ENCODE measurements at regions of chr15 and their contacts with region 1.

Region 1: DNA sequence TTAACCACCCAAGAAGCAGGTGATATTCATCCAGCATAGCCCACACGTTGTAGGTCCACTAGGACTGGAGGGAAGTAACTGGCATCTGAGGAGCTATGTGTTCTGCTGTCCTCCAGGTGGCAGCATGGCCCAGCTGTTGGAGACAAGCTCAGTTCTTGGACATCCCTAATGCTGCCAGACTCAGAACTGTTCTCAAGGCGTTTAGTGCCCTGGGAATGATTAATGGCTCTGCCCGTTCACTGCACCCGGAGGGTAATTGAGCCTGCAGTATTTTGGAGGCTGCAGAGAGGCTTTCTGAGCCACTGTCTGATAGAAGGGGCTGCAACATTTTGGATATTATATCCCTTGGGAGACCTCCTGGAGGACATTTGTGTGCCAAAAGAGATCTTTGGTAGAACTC is 521.2 kb upstream of the SEMA6D start:
- DNase-seq: peak; percentile 70
- H3K4me3 ChIP-seq: peak overlapping the region in 1 of 2 experiments; percentile 10; a peak in 1 of 4 replicates
- H3K27ac ChIP-seq: no peak overlapping the region
- H3K4me1 ChIP-seq: peaks cover 0 to 2% of the 10 kb centered on the region in 2 experiments; a peak in 2 of 4 replicates
- H3K27me3 ChIP-seq: no peaks in the 10 kb centered on the region
- CTCF ChIP-seq: peak; percentile 76
- EP300 ChIP-seq: peak in 1 of 2 experiments; percentile 82; a peak in 2 of 4 replicates
- RAD21 ChIP-seq: peak; percentile 100

Region 2: GRCh38 chr15:47184003-47184907 is 11.8 kb before region 1 on chr15:
- CTCF ChIA-PET with region 1: interaction called, 14 read pairs
- POLR2A ChIA-PET with region 1: no interaction called
- DNase-seq: peak; percentile 79
- H3K4me3 ChIP-seq: peak overlapping the region; percentile 52 to 58
- H3K27ac ChIP-seq: peak overlapping the region in 1 of 2 experiments; percentile 47; a peak in 1 of 4 replicates
- H3K4me1 ChIP-seq: peaks cover 0 to 4% of the 10 kb centered on the region in 2 experiments; a peak in 1 of 4 replicates
- H3K27me3 ChIP-seq: peaks cover 13% of the 10 kb centered on the region
- CTCF ChIP-seq: no peak
- EP300 ChIP-seq: no peak
- RAD21 ChIP-seq: no peak

Region 3: DNA sequence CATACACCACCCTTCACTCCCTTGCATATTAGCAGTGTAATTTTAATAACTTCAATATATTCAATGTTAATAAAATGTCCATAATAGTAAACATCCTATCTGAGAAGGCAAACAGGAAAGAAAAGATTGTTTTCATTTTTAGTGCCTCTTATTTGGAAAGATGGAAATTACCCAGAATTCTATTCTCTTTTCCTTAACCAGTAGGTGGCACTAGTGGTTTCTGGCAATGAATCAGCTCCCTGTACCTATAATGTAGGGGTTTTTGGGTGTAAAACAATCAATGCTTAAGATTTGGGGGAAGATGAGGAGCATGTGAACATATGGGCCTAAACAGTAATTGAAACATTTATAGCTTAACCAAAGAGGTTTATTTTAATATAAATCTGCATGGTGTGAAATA is 515.6 kb after region 1 on chr15:
- CTCF ChIA-PET with region 1: interaction called, 21 read pairs
- POLR2A ChIA-PET with region 1: interaction called, 3 read pairs
- DNase-seq: peak; percentile 38
- H3K4me3 ChIP-seq: no peak overlapping the region
- H3K27ac ChIP-seq: no peak overlapping the region
- H3K4me1 ChIP-seq: peaks cover 2 to 6% of the 10 kb centered on the region in 2 experiments; a peak in 3 of 4 replicates
- H3K27me3 ChIP-seq: 0 out of 2 replicates have a peak, but pooled peaks cover 21% of the 10 kb centered on the region
- CTCF ChIP-seq: peak; percentile 77
- EP300 ChIP-seq: no peak
- RAD21 ChIP-seq: peak; percentile 65

Region 4: DNA sequence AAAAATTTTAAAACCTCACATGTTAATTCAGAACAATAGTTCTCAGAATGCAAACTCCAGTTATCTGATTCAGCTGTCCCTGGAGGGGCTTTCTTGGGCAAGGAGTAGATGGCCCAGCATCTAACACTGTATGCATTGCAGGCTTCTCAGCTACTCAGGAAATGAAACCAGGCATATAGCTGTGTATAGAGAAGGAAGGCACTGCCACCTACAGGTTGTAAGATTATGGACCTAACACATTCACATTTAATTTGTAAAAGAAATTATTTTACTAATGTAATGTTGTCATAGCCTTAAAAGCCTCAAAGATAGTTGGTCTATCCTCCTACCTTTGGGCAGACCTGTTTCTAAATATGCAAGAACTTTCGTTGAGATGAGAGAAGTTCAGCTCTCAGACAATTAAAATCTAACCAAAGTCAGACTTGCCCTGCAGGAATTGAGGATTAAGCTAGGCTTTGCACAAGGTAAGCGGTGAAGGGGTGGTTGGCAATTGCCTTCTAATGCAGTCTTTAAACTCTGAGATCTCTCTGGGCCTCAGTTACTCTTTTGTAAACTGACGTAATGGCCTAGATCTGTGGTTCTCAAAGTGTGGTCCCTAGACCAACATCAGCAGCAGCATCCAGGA is 792.0 kb after region 1 on chr15:
- CTCF ChIA-PET with region 1: interaction called, 156 read pairs
- POLR2A ChIA-PET with region 1: interaction called, 5 read pairs
- DNase-seq: peak; percentile 45
- H3K4me3 ChIP-seq: no peak overlapping the region; a peak in 1 of 4 replicates
- H3K27ac ChIP-seq: no peak overlapping the region
- H3K4me1 ChIP-seq: peaks cover 0 to 3% of the 10 kb centered on the region in 2 experiments; a peak in 2 of 4 replicates
- H3K27me3 ChIP-seq: no peaks in the 10 kb centered on the region
- CTCF ChIP-seq: peak; percentile 76
- EP300 ChIP-seq: no peak; a peak in 1 of 4 replicates
- RAD21 ChIP-seq: peak; percentile 98

Region 5: DNA sequence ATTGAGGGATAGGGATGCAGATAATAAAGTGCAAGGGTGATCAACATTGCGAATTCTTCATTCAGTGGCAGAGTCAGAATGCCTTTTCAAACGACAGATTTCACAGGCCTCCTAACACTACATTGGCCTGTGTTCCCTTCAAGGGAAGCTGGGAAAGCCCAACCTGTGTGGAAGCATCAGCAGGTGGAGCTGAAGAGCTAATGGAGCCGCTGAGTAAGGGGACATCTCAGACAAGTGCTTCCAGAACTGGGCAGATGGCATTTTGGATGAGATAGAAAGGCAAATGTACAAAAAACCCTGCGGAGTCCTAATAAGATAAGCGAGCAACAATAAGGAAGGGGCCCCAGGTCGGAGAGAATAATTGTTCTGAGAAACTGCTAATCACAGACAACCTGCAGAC is 916.2 kb after region 1 on chr15:
- CTCF ChIA-PET with region 1: interaction called, 13 read pairs
- POLR2A ChIA-PET with region 1: no interaction called
- DNase-seq: peak; percentile 36
- H3K4me3 ChIP-seq: no peak overlapping the region
- H3K27ac ChIP-seq: no peak overlapping the region
- H3K4me1 ChIP-seq: no peaks in the 10 kb centered on the region; a peak in 1 of 4 replicates
- H3K27me3 ChIP-seq: no peaks in the 10 kb centered on the region
- CTCF ChIP-seq: peak; percentile 64
- EP300 ChIP-seq: no peak
- RAD21 ChIP-seq: peak; percentile 81

Region 6: GRCh38 chr15:48352474-48353072 is 1156.5 kb after region 1 on chr15:
- CTCF ChIA-PET with region 1: interaction called, 11 read pairs
- POLR2A ChIA-PET with region 1: no interaction called
- DNase-seq: peak; percentile 63
- H3K4me3 ChIP-seq: no peak overlapping the region
- H3K27ac ChIP-seq: no peak overlapping the region
- H3K4me1 ChIP-seq: no peaks in the 10 kb centered on the region
- H3K27me3 ChIP-seq: no peaks in the 10 kb centered on the region
- CTCF ChIP-seq: peak; percentile 85
- EP300 ChIP-seq: no peak
- RAD21 ChIP-seq: peak; percentile 80